ENCODE measurements at regions of chr12 and their contacts with region 1.

Region 1: DNA sequence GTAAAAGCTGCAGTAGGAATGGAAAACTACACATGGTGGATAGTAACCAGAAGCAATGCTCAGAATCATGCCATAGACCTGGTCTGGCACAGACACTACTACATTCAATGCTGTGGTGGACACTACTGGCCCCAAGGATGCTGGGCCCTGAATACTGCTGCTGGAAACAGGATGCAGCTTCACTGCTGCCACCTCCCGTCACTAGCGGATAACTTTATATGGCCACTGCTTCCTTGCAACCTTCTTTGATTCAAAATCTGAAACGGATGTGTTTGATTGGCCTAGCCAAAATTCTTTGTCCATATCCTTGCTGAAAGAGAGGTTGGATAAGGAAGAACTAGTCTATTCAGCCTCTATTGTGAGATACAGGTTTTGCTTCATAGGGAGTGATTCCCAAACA is 30.7 kb downstream of the ADCY6 start:
- DNase-seq: no peak
- H3K4me3 ChIP-seq: no peak overlapping the region
- H3K27ac ChIP-seq: no peak overlapping the region
- H3K4me1 ChIP-seq: no peaks in the 10 kb centered on the region
- H3K27me3 ChIP-seq: no peaks in the 10 kb centered on the region
- CTCF ChIP-seq: no peak
- POLR2A ChIP-seq: no peak

Region 2: GRCh38 chr12:48084066-48084465 is 674.2 kb before region 1 on chr12:
- intact Hi-C with region 1: no loop called
- DNase-seq: no peak
- H3K4me3 ChIP-seq: no peak overlapping the region
- H3K27ac ChIP-seq: no peak overlapping the region
- H3K4me1 ChIP-seq: no peaks in the 10 kb centered on the region
- H3K27me3 ChIP-seq: no peaks in the 10 kb centered on the region
- CTCF ChIP-seq: peak in 2 of 4 experiments; percentile 34 to 35
- POLR2A ChIP-seq: no peak

Region 3: DNA sequence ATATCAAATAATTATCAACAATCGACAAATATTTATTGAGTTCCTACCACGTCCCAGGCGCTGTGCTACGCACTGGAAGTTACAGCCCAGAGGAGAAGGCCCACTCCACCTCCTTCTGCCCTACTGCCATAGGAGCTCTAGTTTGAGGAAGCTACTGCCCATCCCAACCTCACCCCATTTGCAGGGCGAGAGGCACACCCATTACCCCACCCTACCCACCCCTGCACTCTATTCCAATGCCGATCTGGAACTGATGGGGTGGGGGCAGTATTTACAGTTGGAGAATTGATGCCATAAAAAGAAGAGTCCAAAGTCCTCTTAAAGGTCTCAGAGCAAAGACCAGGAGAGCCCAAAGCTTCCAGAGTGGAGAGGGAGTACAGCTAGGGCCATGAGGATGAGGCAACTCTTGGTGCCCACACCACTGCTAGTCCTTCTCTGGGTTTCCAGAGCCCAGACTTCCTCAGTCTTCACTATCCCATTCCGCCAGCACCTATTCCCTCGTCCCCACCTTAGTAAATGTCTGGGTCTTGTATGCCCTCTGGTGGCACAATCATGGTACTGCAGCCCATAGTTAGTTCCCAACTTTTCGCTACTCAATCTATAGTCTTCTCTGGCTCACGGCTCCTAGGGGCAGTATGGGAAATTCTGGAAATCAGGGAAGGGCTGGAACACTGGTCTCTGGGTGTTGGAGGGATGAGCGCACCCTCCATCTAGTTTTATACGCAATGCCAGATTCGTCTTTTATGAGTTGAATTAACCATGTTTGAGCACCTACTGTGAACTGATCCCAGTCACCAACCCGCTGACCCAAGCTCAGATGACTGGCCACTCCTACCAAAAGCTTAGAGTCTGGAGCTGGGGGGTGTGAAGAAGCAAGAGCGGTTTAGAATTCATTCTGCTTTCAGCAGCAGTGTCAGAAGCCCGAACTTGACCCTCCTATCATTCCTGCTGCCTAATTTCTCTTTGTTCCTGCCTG is 37.5 kb after region 1 on chr12:
- intact Hi-C with region 1: loop called (anchors 1 kb)
- DNase-seq: peak; percentile 75
- H3K4me3 ChIP-seq: no peak overlapping the region
- H3K27ac ChIP-seq: no peak overlapping the region
- H3K4me1 ChIP-seq: no peaks in the 10 kb centered on the region
- H3K27me3 ChIP-seq: no peaks in the 10 kb centered on the region
- CTCF ChIP-seq: peak; percentile 93 to 98 (median 96)
- POLR2A ChIP-seq: no peak